PC-9 (cell line): ENCODE measurements at regions of chr16 and their contacts with region 1.

Region 1: GRCh38 chr16:57720142-57720575 is 15.4 kb upstream of the KATNB1 start:
- DNase-seq: peak in 1 of 2 experiments; percentile 59
- H3K4me3 ChIP-seq: no peak overlapping the region
- H3K27ac ChIP-seq: no peak overlapping the region
- H3K4me1 ChIP-seq: no peaks in the 10 kb centered on the region
- H3K27me3 ChIP-seq: peaks cover 10% of the 10 kb centered on the region; the same call in 1 of the 2 replicates
- CTCF ChIP-seq: peak; percentile 75

Region 2: DNA sequence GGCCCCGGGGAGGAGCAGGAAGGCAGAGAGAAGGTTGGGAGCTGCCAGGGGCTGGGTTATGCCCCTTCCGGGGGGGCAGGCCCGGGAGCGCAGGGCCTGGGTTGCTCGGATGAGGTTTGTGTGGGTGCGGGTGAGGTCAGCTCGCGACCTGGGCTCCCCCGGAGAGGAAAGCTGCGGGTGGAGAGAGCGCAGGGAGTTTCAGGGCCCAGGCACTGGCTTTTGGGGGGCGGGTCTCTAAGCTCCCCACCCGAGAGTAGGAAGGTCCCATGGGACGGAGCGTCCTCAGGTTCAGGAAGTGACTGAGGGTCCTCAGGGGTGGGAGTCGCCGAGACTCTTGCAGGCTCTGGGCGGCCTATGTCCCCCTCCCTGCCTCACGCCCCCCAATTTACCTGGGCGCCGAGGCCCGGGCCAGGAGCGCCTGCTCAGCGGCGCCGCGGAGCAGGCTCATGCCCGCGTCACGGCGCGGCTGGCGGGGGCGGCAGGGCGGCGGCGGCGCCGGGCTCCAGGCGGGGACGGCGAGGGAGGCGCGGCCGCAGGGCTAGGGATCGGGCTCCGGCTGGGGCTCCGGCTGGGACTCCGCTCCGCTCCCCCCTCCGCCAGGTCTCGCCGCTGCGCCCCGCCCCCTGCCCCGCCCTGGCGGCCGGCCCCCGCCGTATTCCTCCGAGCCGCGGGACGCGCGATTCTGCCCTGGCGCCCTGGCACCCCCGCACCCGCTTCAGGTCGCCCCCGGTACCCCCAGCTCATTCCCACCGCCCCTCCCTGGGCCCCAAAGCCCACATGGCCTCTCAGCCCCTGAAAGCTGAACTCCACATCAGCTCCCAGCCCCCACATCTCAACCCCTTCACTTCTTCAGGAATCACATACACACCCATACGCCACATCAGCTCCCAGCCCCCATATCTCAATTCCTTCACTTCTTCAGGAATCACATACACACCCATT is 234.0 kb before region 1 on chr16 and contains the start of gene DOK4:
- CTCF ChIA-PET with region 1: no interaction called
- POLR2A ChIA-PET with region 1: no interaction called
- intact Hi-C with region 1: no loop called
- DNase-seq: peak in 1 of 2 experiments; percentile 77
- H3K4me3 ChIP-seq: peak within 1 kb of the TSS; percentile 75
- H3K27ac ChIP-seq: no peak within 1 kb of the TSS
- H3K4me1 ChIP-seq: no peaks in the 10 kb centered on the region
- H3K27me3 ChIP-seq: no peaks in the 10 kb centered on the region
- CTCF ChIP-seq: no peak
- total RNA-seq, gene DOK4: 27.4 and 38.7 TPM in 2 replicates

Region 3: DNA sequence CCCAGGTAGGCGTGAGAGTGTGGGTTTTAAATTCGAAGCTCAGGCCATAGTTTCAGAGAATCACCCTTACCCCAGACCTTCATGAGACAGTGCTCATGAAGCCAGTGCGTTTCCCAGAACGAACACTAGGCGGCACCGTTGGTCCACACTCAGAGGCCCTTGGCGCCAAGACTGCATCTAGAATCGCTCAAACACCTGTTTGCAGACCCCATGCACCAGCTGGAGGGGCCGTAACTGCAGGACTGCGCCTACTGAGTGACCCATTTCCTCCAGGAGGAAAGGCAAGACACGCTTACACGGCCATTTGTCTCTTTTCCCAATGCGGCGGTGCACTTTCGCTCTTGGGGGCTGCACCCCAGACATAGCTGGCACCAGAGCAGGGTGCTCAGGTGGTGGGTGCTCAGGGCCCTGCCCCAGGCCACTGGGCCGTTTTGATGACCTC is 143.7 kb before region 1 on chr16:
- CTCF ChIA-PET with region 1: no interaction called
- POLR2A ChIA-PET with region 1: no interaction called
- intact Hi-C with region 1: loop called (anchors 1 kb)
- DNase-seq: peak; percentile 52 to 69
- H3K4me3 ChIP-seq: no peak overlapping the region
- H3K27ac ChIP-seq: no peak overlapping the region
- H3K4me1 ChIP-seq: no peaks in the 10 kb centered on the region
- H3K27me3 ChIP-seq: no peaks in the 10 kb centered on the region
- CTCF ChIP-seq: peak; percentile 95

Region 4: GRCh38 chr16:57591086-57591869 is 128.9 kb before region 1 on chr16:
- CTCF ChIA-PET with region 1: interaction called, 3 read pairs
- POLR2A ChIA-PET with region 1: no interaction called
- intact Hi-C with region 1: loop called (anchors 5 kb)
- DNase-seq: peak; percentile 79
- H3K4me3 ChIP-seq: no peak overlapping the region; the same call in 1 of the 2 replicates
- H3K27ac ChIP-seq: peak overlapping the region; percentile 80
- H3K4me1 ChIP-seq: peaks cover 16% of the 10 kb centered on the region
- H3K27me3 ChIP-seq: no peaks in the 10 kb centered on the region
- CTCF ChIP-seq: peak; percentile 97

Region 5: GRCh38 chr16:58152246-58152868 is 432.2 kb after region 1 on chr16:
- CTCF ChIA-PET with region 1: interaction called, 11 read pairs
- POLR2A ChIA-PET with region 1: no interaction called
- intact Hi-C with region 1: no loop called
- DNase-seq: no peak
- H3K4me3 ChIP-seq: no peak overlapping the region
- H3K27ac ChIP-seq: no peak overlapping the region
- H3K4me1 ChIP-seq: no peaks in the 10 kb centered on the region
- H3K27me3 ChIP-seq: no peaks in the 10 kb centered on the region
- CTCF ChIP-seq: no peak

Region 6: GRCh38 chr16:58589326-58589905 is 869.3 kb after region 1 on chr16:
- CTCF ChIA-PET with region 1: no interaction called
- POLR2A ChIA-PET with region 1: no interaction called
- intact Hi-C with region 1: no loop called
- DNase-seq: no peak
- H3K4me3 ChIP-seq: no peak overlapping the region
- H3K27ac ChIP-seq: no peak overlapping the region
- H3K4me1 ChIP-seq: no peaks in the 10 kb centered on the region
- H3K27me3 ChIP-seq: no peaks in the 10 kb centered on the region
- CTCF ChIP-seq: no peak